ENCODE measurements at regions of chr18 and their contacts with region 1.

Region 1: DNA sequence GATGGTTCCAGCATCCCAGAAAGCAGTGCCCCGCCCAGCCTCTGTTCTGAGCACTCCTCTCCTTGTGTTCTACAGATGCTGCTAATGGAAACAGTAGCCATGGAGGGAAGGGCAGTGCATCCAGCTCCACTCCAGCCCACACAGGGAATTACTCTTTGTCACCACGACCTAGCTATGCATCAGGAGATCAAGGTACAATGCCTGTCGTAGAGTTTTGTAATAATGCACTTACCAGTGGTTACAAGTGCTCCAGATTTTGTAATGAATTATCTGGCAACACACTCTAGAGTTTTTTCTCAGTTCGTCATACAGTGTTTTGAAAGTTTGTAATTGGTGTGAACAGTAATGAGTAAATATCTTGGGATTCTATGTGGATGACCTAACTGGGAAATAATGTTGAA is 161.1 kb downstream of the ESCO1 start:
- DNase-seq: peak; percentile 69
- H3K4me3 ChIP-seq: no peak overlapping the region
- CTCF ChIP-seq: no peak

Region 2: GRCh38 chr18:21111341-21112139 is 327.9 kb before region 1 on chr18 and contains the start of gene ROCK1:
- CTCF ChIA-PET with region 1: no interaction called
- POLR2A ChIA-PET with region 1: no interaction called
- DNase-seq: peak; percentile 74
- H3K4me3 ChIP-seq: peak within 1 kb of the TSS; percentile 94
- CTCF ChIP-seq: no peak

Region 3: DNA sequence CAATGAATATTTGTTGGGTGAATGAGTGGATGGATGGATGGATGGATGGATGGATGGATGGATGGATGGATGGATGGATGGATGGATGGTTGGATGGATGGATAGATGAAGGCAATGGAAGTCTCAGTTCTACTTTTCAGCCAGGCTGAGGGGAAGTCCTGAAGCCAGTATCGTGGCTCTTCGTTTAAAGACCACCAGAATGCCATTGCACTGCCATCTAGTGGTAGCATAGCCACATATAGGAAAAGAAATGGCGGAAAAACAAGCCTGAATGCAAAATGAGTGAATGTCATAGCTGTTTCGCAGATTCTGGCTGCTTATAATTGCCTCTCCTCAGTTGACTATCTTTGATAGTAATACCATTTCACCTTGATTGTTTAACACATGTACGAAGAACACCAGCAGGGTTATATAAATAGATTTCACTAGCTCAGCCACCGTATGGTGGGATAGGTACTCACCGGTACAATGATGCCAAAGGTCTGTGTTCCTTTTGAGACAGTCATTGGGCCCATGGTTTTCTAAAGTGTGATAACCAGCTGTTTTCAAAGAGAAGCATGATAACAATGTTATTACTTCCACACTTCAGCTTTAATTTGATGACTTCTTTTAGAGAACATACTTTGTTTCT is 259.7 kb before region 1 on chr18:
- CTCF ChIA-PET with region 1: no interaction called
- POLR2A ChIA-PET with region 1: no interaction called
- DNase-seq: no peak
- H3K4me3 ChIP-seq: no peak overlapping the region
- CTCF ChIP-seq: peak; percentile 66

Region 4: GRCh38 chr18:21452796-21453510 is 13.5 kb after region 1 on chr18:
- CTCF ChIA-PET with region 1: interaction called, 15 read pairs
- POLR2A ChIA-PET with region 1: no interaction called
- DNase-seq: peak; percentile 34
- H3K4me3 ChIP-seq: no peak overlapping the region
- CTCF ChIP-seq: no peak

Measured in AG04449 (cell line).